BJ (cell line): ENCODE measurements at regions of chr14 and their contacts with region 1.

Region 1: GRCh38 chr14:77053046-77053841 is 24.7 kb upstream of the IRF2BPL start:
- DNase-seq: no peak
- H3K4me3 ChIP-seq: no peak overlapping the region
- H3K27me3 ChIP-seq: no peaks in the 10 kb centered on the region
- CTCF ChIP-seq: peak; percentile 90

Region 2: DNA sequence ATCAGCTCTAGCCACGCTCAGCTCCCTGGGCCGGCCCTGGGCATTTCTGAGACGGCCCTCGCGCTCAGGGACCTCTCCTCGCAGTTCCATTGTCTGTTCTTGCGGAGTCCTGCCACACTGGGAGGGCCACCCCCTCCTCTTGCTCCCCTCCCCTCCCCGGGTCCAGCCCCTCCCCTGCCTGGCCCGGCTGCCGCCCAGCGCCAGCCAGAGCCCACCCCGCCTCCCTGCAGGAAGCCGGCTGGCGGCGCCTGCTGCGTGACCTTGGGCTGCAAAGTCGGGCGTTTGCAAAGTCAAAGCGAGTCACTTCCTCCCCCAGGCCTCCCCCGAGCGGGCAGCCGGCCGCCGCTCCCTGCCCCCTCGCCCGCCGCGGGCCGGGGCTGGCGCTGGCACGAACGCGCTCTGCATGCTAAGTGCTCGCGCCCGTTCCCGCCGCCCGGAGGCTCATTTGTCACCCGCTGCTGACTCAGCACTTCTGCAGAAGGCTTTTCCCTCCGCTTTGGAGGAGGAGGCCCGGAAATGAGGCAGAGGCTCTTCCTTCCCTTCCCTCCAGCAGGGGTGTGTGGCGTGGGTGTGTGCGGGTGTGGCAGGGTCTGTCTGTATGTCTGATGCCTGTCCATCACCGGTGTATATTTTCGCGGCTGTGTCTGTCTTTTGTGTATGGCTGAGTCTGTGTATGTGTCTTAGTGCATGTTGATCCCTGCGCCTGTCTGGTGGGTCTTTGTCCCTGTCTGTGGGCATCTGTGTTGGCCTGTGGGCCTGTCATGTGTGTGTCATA is 96.7 kb before region 1 on chr14:
- CTCF ChIA-PET with region 1: interaction called, 13 read pairs
- POLR2A ChIA-PET with region 1: interaction called, 3 read pairs
- DNase-seq: peak; percentile 78
- H3K4me3 ChIP-seq: peak overlapping the region; percentile 15
- H3K27me3 ChIP-seq: no peaks in the 10 kb centered on the region
- CTCF ChIP-seq: 0 out of 2 replicates have a peak, but pooled peaks have one; percentile 2

Region 3: GRCh38 chr14:77028384-77029231 is 24.6 kb before region 1 on chr14 and contains the start of gene IRF2BPL:
- CTCF ChIA-PET with region 1: interaction called, 39 read pairs
- POLR2A ChIA-PET with region 1: no interaction called
- DNase-seq: peak; percentile 95
- H3K4me3 ChIP-seq: peak within 1 kb of the TSS; percentile 73
- H3K27me3 ChIP-seq: no peaks in the 10 kb centered on the region
- CTCF ChIP-seq: no peak
- polyA plus RNA-seq, gene IRF2BPL: 11.3 and 17.6 TPM in 2 replicates

Region 4: DNA sequence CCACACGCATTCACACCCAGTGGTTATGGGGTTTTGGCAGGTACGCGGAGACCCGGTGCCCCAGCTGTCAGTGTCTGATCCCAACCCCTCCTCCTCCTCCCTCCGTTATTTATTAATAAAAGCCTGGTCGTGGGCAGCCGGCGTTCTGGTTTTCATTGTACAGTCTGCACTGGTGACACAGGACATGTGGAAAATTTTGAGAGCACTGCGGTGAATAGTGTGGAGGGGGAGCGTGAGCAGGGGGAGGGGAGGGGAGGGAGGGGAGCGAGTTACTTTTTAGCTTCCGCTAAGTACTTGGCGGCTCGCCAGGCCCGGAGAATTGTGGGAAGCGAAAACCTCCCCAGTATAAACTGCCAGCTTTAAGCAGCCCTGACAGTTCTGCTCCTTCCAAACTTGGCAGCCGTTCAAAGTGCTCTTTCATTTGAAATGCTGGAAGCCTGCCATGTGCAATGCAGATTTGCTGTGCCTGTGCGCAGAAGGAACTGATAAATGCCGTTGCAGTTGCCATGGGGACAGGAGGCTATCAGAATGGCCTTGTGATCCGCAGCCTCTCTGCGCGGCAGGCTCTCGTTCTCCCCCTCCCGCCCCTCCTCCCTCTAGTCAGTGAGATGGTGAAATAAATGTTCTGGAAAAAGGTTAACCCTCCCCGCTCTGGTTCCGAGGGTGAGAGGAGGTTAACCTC is 13.0 kb before region 1 on chr14:
- CTCF ChIA-PET with region 1: interaction called, 20 read pairs
- POLR2A ChIA-PET with region 1: no interaction called
- DNase-seq: peak; percentile 94
- H3K4me3 ChIP-seq: peak overlapping the region; percentile 22
- H3K27me3 ChIP-seq: no peaks in the 10 kb centered on the region
- CTCF ChIP-seq: no peak

Region 5: DNA sequence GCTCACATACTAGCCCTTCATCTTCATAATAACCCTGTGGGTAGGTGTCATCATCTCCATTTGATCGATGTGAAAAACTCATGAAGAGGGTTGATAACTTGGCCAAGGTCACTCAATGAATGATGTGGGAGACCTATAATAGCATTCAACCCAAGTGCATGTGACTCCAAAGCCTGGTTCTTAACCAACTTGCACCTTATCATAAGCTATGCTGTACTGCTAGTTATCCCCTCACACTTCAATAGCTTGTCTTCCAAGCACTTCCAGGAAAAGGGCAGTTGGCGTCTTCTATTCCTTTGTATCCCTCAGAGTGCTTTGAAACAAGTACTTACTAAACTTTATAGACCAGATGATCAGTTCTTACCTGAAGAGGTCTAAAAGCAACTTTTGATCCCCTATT is 389.0 kb after region 1 on chr14:
- CTCF ChIA-PET with region 1: no interaction called
- POLR2A ChIA-PET with region 1: no interaction called
- DNase-seq: no peak
- H3K4me3 ChIP-seq: no peak overlapping the region
- H3K27me3 ChIP-seq: no peaks in the 10 kb centered on the region
- CTCF ChIP-seq: no peak